PC-3 (cell line): ENCODE measurements at regions of chr13 and their contacts with region 1.

Region 1: DNA sequence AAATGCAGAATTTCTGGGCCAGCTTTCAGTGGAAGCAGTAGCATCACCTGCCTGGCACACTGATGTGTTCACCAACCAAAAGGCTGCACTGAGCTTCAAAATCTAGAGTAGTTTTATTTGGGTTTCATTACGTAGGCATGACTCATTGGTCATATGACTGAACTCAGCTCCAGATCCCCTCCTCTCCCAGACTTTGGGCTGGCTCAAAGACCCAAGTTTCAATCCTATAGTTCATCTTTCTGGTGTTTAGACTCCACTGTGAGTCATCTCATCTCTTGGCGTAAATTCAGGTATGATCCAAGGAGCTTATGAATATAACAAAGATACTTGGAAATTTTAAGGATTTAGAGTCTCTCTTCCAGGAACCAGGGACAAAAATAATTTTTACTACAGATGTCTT is 17.7 kb downstream of the ZMYM5 start:
- DNase-seq: peak; percentile 99
- ATAC-seq: peak; percentile 98
- H3K4me3 ChIP-seq: no peak overlapping the region
- H3K27ac ChIP-seq: peak overlapping the region; percentile 89
- H3K4me1 ChIP-seq: peaks cover 17% of the 10 kb centered on the region
- H3K27me3 ChIP-seq: no peaks in the 10 kb centered on the region
- CTCF ChIP-seq: no peak

Region 2: DNA sequence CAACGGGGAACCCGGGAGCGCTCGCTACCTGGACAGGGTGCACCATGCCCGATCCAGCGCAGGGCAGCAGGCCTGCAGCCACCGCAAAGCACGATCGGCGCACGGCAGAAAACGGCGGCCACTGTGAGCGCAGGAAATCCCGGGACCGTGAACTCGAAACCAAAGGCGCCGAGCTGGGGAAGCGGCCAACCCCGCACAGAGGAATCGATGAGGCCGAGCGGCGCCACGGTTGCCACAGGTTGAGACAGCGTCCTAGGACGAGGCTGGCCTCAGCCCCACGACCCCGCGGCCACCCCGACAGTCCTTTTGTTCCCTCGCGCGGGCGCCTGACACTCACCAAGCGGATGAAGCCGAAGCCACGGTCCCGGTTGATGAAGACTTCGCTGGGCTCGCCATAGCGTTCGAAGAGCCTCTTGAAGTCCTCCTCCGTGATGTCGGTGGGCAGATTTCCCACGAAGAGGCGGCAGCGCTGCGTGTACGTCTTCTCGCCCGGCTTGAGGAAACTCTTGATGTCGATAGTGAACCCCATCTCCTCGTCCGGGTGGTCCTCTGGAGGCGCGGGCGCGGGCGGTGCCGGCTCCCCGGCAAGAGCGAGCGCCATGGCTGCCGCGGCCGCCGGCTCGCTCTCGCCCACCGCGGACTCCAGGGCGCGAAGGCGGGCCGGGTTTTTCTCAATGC is 63.6 kb before region 1 on chr13:
- CTCF ChIA-PET with region 1: no interaction called
- POLR2A ChIA-PET with region 1: no interaction called
- intact Hi-C with region 1: loop called (anchors 5 kb)
- DNase-seq: peak; percentile 26
- ATAC-seq: peak; percentile 48
- H3K4me3 ChIP-seq: peak overlapping the region; percentile 99
- H3K27ac ChIP-seq: peak overlapping the region; percentile 72
- H3K4me1 ChIP-seq: no peaks in the 10 kb centered on the region
- H3K27me3 ChIP-seq: no peaks in the 10 kb centered on the region
- CTCF ChIP-seq: no peak

Region 3: DNA sequence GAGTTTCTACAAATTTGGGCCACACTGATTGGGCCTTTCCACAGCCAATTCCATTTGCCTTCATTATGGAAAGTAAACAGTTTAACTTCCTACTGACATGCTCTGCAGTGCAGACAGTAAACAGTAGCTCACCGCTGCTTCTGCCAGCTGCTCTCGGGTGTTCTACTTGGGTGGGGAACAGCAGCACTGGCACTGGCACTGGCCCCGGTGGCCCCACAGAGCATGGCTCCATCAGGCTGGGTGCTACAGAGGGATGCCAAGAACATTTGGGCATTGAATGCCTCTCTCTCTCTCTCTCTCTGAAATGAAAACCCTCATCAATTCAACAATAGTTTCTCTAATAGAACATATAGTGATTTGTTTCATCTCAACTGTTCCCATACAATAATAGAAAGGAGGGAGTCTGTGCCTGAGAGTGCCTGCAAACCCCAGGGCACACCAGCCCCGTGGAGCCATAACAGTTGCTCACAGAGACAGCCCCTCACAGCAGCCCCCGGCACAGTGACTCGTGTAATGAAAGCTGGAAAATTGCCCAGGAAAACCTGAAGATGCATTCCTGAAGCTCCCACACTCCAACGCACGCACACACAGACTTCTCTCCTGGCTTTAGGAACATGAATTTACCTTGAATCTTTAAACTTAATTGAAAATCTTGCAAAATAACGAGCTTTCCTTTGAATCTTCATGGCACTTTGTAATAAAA is 424.6 kb after region 1 on chr13:
- CTCF ChIA-PET with region 1: no interaction called
- POLR2A ChIA-PET with region 1: no interaction called
- intact Hi-C with region 1: no loop called
- DNase-seq: no peak
- ATAC-seq: no peak
- H3K4me3 ChIP-seq: no peak overlapping the region
- H3K27ac ChIP-seq: no peak overlapping the region
- H3K4me1 ChIP-seq: 0 out of 2 replicates have a peak, but pooled peaks cover 8% of the 10 kb centered on the region
- H3K27me3 ChIP-seq: no peaks in the 10 kb centered on the region
- CTCF ChIP-seq: no peak